Activated T-helper 1 cell treated with anti-CD3 and anti-CD28 coated beads, Interleukin-12 subunit alpha, Interleukin-12 subunit beta, Interleukin-2, Interleukin-4 antibody, amounts not matched to agents 30 ng/mL and 10 ng/mL and 1 ng/mL, durations not matched to agents 14 hours and 24 hours and 36 hours (primary cell): ENCODE measurements at regions of chr22 and their contacts with region 1.

Region 1: GRCh38 chr22:41448189-41448808 is 1.7 kb upstream of the TOB2 start:
- DNase-seq: peak; percentile 90
- H3K4me3 Mint-ChIP-seq: peak overlapping the region; percentile 97
- H3K27ac Mint-ChIP-seq: peak overlapping the region; percentile 98
- H3K4me1 Mint-ChIP-seq: peaks cover 15% of the 10 kb centered on the region
- H3K27me3 Mint-ChIP-seq: peaks cover 2% of the 10 kb centered on the region

Region 2: GRCh38 chr22:39520054-39520891 is 1928.0 kb before region 1 on chr22 and contains the start of gene ATF4:
- intact Hi-C with region 1: loop called (anchors 5 kb)
- DNase-seq: peak; percentile 96
- H3K4me3 Mint-ChIP-seq: peak within 1 kb of the TSS; percentile 97
- H3K27ac Mint-ChIP-seq: peak within 1 kb of the TSS; percentile 100
- H3K4me1 Mint-ChIP-seq: peaks cover 60% of the 10 kb centered on the region
- H3K27me3 Mint-ChIP-seq: peaks cover 2% of the 10 kb centered on the region
- total RNA-seq, gene ATF4: 387 and 390 TPM in 2 replicates

Region 3: GRCh38 chr22:41091132-41092022 is 356.9 kb before region 1 on chr22:
- intact Hi-C with region 1: loop called (anchors 1 kb)
- DNase-seq: peak; percentile 98
- H3K4me3 Mint-ChIP-seq: peak overlapping the region; percentile 100
- H3K27ac Mint-ChIP-seq: peak overlapping the region; percentile 100
- H3K4me1 Mint-ChIP-seq: peaks cover 30% of the 10 kb centered on the region
- H3K27me3 Mint-ChIP-seq: peaks cover 2% of the 10 kb centered on the region

Region 4: GRCh38 chr22:41381329-41382097 is 66.8 kb before region 1 on chr22 and contains the start of gene TEF:
- intact Hi-C with region 1: loop called (anchors 1 kb)
- DNase-seq: peak; percentile 97
- H3K4me3 Mint-ChIP-seq: peak within 1 kb of the TSS; percentile 85
- H3K27ac Mint-ChIP-seq: peak within 1 kb of the TSS; percentile 93
- H3K4me1 Mint-ChIP-seq: peaks cover 6% of the 10 kb centered on the region
- H3K27me3 Mint-ChIP-seq: no peaks in the 10 kb centered on the region
- total RNA-seq, gene TEF: 1.6 and 2.1 TPM in 2 replicates

Region 5: DNA sequence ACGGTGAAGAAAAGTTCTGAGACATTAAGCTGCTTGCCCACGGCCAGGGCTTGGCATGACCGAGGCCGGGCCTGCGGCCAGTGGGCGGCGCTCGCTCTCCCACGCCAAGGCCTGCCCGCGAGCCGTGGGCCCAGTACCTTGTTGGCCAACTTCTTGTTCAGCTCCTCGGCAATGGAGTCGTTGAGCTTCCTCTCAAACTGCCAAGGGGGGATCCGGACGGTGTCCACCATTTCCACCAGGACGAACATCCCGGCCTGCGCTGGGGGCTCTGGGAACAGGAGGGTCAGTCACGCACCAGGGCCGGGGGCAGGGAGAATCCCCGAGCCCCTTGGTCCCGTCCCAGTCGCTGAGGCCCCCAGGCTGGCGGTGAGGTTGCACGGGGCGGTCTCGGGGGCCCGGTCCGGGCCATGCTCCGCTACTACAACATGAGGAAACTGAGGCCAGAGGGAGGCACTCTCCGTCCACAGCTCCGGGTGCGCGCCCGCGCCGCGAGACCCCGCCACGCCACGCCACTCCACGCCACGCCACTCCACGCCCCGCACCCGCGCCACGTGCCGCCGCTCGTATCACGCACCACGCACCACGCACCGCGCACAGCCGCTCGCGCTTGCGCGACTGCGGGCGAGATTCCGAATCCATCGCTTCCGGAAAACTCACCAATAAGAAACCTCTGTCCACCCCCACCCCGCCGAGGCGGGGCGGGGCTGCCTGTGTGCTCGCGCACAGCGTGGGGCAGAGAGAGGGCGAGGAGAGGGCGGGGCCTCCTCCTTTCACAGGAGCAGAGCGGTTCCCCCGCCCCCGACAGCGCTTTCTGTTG is 95.8 kb after region 1 on chr22 and contains the start of gene POLR3H:
- intact Hi-C with region 1: loop called (anchors 1 kb)
- DNase-seq: peak; percentile 97
- H3K4me3 Mint-ChIP-seq: peak within 1 kb of the TSS; percentile 93
- H3K27ac Mint-ChIP-seq: peak within 1 kb of the TSS; percentile 84
- H3K4me1 Mint-ChIP-seq: peaks cover 40% of the 10 kb centered on the region
- H3K27me3 Mint-ChIP-seq: peaks cover 3% of the 10 kb centered on the region
- total RNA-seq, gene POLR3H: 51.8 and 52.0 TPM in 2 replicates

Region 6: GRCh38 chr22:41688365-41689211 is 240.3 kb after region 1 on chr22 and contains the start of gene SNU13:
- intact Hi-C with region 1: loop called (anchors 2 kb)
- DNase-seq: peak; percentile 92
- H3K4me3 Mint-ChIP-seq: peak within 1 kb of the TSS; percentile 98
- H3K27ac Mint-ChIP-seq: peak within 1 kb of the TSS; percentile 98
- H3K4me1 Mint-ChIP-seq: peaks cover 17% of the 10 kb centered on the region
- H3K27me3 Mint-ChIP-seq: no peaks in the 10 kb centered on the region
- total RNA-seq, gene SNU13: 337 and 339 TPM in 2 replicates